HEK293 (cell line): ENCODE measurements at regions of chr14 and their contacts with region 1.

Region 1: DNA sequence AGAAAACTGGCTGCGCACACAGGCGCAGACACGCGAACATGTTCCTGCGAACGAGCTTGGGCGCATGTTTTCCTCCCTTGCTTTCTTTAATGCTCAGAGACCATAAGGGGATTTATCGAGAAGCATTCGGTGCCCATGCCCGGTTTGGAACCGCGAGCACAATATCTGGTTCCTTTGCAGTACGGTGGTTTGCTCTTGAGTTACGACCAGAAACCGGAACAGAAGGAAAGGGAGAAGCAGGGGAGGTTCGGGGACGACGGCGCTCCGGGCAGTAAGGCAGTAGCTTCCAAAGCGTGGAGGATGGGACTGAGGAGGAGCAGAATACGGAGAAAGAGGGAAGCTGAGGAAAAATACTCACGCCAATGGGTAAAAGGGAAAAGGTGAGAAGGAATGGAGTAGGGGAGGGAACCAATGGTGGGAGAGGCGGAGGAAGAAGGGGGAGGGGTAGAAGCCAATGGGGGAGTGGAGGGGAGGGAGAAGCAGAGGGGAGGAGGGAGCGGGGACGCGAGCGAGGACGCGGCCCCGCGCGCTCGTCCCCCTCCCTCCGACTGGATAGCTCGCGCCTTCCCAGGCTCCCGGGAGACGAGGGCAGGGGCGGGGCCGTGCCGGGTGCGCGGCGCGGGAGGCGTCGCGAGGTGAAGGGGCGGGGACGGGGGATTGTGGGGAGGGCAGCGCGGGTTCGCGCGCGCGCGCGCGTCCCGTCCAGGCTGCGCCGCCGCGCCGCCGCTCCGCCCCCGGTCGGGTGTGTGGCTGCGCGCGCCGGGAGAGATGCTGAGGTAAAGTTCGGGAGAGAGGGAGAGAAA is 625 bp upstream of the ARHGAP5 start:
- H3K4me3 ChIP-seq: peak overlapping the region; percentile 88
- H3K27ac ChIP-seq: peak overlapping the region; percentile 99
- H3K4me1 ChIP-seq: peaks cover 5% of the 10 kb centered on the region
- CTCF ChIP-seq: no peak

Region 2: GRCh38 chr14:31926123-31926522 is 150.4 kb before region 1 on chr14:
- CTCF ChIA-PET with region 1: interaction called, 6 read pairs
- POLR2A ChIA-PET with region 1: interaction called, 11 read pairs
- H3K4me3 ChIP-seq: no peak overlapping the region
- H3K27ac ChIP-seq: no peak overlapping the region
- H3K4me1 ChIP-seq: peaks cover 9% of the 10 kb centered on the region
- CTCF ChIP-seq: no peak

Region 3: DNA sequence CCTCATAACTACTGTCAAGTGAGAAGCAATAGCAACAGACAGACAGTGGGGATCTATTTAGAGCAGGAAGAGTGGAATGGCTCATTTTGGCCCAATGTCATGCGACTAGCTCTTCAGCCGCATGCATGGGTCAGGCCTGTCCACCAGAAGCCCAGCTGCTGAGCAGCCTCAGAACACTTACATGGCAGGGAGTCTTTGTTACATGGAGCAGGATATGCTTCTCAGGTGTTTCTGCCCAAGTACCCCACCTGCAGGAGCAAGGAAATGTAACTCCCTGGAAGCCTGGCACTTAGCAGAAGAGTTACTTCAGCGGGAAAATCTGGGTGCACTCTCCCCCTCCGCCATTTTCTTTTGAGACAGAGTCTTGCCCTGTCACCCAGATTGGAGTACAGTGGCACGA is 72.9 kb before region 1 on chr14:
- CTCF ChIA-PET with region 1: no interaction called
- POLR2A ChIA-PET with region 1: interaction called, 10 read pairs
- H3K4me3 ChIP-seq: no peak overlapping the region
- H3K27ac ChIP-seq: no peak overlapping the region
- H3K4me1 ChIP-seq: peaks cover 11% of the 10 kb centered on the region
- CTCF ChIP-seq: no peak

Region 4: DNA sequence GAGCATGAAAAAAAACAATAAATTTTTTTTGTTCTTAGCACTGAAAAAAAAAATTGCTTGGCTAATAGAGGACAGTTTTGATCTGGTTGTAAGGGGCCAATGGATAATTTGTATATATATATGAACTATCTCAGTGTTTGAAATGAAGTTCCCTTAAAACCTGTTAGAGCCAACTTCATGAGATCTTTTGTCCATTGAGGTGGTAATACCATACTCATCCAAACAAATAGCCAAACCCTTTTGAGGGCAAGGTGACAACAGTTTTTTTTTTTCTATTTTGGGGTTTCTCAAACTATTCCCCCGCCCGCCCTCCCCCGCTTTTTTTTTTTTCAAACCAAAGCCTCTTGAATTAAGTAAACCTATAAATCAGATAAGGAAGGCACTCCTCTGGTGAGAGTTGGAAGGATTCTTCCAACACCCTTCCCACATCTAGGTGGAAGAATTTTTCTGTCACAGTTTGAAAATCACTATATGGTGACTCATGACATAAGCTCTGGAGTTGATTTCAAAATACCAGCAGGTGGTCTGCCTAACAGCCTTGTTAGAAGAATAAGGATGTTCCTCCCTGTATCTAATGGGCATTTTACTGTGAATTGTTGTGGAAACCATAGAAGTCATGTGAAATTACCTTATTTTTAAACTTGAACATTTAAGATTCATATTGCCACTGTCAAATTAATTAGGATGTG is 10.8 kb after region 1 on chr14:
- CTCF ChIA-PET with region 1: interaction called, 7 read pairs
- POLR2A ChIA-PET with region 1: interaction called, 17 read pairs
- H3K4me3 ChIP-seq: no peak overlapping the region
- H3K27ac ChIP-seq: no peak overlapping the region
- H3K4me1 ChIP-seq: peaks cover 54% of the 10 kb centered on the region
- CTCF ChIP-seq: no peak

Region 5: GRCh38 chr14:32202998-32203882 is 126.8 kb after region 1 on chr14 and contains the start of gene RNU6-8:
- CTCF ChIA-PET with region 1: interaction called, 5 read pairs
- POLR2A ChIA-PET with region 1: interaction called, 36 read pairs
- H3K4me3 ChIP-seq: peak within 1 kb of the TSS; percentile 46
- H3K27ac ChIP-seq: peak within 1 kb of the TSS; percentile 95
- H3K4me1 ChIP-seq: peaks cover 15% of the 10 kb centered on the region; the same call in 1 of the 2 replicates
- CTCF ChIP-seq: no peak